ENCODE measurements at regions of chr14 and their contacts with region 1.

Region 1: DNA sequence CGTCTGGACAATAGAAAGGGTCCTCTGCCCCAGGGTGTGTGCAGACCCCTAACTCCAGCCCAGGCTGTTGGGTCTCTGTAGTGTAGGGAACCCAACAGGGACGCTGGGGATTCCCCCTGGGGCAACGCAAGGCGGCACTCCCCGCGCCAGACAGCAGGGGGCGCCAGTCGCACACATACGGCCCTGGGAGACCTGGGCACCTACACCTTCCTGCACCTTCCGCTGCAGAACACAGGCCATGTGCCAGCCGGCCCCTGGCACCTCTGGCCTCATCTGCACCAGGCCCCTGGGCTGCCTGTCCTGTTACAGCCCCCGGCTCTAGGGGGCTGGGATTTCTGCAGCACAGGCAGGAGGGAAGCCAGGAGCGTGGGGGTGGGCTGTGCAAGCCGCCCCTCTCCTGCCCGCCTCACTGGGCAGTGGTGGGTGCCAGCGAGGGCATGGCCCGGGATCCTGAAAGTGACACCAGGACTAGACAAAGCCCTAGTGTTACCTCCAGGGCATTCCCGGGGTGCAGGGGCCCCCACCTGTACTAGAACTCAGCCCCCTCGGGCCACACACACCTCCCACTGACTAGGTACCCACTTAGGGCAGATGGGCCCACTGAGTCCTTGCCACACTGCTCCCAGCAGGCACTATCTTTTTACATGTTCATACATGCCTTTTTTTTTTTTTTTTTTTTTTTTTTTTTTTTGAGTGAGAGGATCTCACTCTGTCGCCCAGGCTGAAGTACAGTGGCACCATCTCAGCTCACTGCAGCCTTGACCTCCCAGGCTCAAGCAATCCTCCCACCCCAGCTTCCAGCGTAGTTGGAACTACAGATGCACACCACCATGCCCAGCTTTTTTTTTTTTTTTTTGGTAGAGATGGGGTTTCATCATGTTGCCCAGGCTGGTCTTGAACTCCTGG is 37.5 kb downstream of the CCNK start:
- DNase-seq: peak; percentile 91
- H3K4me3 ChIP-seq: no peak overlapping the region
- H3K27ac ChIP-seq: no peak overlapping the region
- H3K4me1 ChIP-seq: peaks cover 25 to 42% (median 29%) of the 10 kb centered on the region in 4 donors
- H3K27me3 ChIP-seq: no peaks in the 10 kb centered on the region
- CTCF ChIP-seq: peak in 5 of 7 experiments; percentile 97 to 99 (median 98)
- EP300 ChIP-seq: no peak
- POLR2A ChIP-seq: no peak

Region 2: GRCh38 chr14:99630202-99630601 is 111.5 kb after region 1 on chr14:
- intact Hi-C with region 1: loop called (anchors 5 kb)
- DNase-seq: no peak
- H3K4me3 ChIP-seq: no peak overlapping the region
- H3K27ac ChIP-seq: no peak overlapping the region
- H3K4me1 ChIP-seq: peaks cover 0 to 10% (median 7%) of the 10 kb centered on the region in 4 donors
- H3K27me3 ChIP-seq: peaks cover 0 to 13% (median 0%) of the 10 kb centered on the region in 3 donors
- CTCF ChIP-seq: no peak
- EP300 ChIP-seq: no peak
- POLR2A ChIP-seq: no peak

Measured in stomach (tissue), 19 donors.